ENCODE measurements at regions of chr16 and their contacts with region 1.

Region 1: GRCh38 chr16:2799866-2800239 is 1.6 kb downstream of the PRSS41 start:
- DNase-seq: no peak
- ATAC-seq: no peak
- H3K4me3 ChIP-seq: no peak overlapping the region
- H3K27ac ChIP-seq: no peak overlapping the region
- H3K4me1 ChIP-seq: peaks cover 0 to 10% (median 0%) of the 10 kb centered on the region in 12 donors
- H3K27me3 ChIP-seq: peaks cover 0 to 30% (median 8%) of the 10 kb centered on the region in 9 donors
- CTCF ChIP-seq: no peak
- POLR2A ChIP-seq: no peak

Region 2: DNA sequence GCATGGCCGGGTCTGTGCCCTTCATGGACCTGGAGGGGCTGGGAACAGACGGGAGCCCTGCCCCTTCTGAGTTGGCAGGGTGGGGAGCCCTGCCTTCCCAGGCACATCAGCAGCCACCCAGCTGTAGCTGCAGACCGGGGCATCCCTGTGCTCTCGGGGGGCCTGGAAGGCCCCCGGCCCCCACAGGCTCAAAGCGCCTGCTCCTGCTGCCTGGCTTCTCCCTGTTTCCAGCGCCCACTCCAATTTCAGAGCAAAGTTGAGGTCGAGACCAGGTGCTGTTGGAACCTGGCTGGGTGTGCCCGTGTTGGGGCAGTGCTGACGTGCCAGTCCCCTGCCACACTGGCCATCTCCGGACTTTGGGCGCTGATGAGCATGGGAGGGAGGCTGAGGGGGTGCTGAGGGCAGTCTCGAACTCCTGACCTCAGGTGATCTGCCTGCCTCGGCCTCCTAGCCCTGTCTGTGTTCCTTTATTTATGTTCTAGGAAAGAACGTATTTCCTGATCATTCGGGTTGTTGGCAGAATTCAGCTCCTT is 75.0 kb before region 1 on chr16:
- intact Hi-C with region 1: no loop called
- DNase-seq: no peak
- ATAC-seq: no peak
- H3K4me3 ChIP-seq: no peak overlapping the region
- H3K27ac ChIP-seq: no peak overlapping the region
- H3K4me1 ChIP-seq: peaks cover 0 to 15% (median 9%) of the 10 kb centered on the region in 12 donors
- H3K27me3 ChIP-seq: peaks cover 0 to 8% (median 0%) of the 10 kb centered on the region in 9 donors
- CTCF ChIP-seq: no peak
- POLR2A ChIP-seq: no peak

Region 3: GRCh38 chr16:2854700-2855309 is 55.0 kb after region 1 on chr16:
- intact Hi-C with region 1: loop called in 2 of 10 experiments (anchors 10 kb)
- DNase-seq: no peak
- ATAC-seq: no peak
- H3K4me3 ChIP-seq: no peak overlapping the region
- H3K27ac ChIP-seq: no peak overlapping the region
- H3K4me1 ChIP-seq: peaks cover 0 to 8% (median 0%) of the 10 kb centered on the region in 12 donors
- H3K27me3 ChIP-seq: peaks cover 13 to 59% (median 39%) of the 10 kb centered on the region in 9 donors
- CTCF ChIP-seq: peak in 5 of 12 donors; percentile 22 to 32 (median 27)
- POLR2A ChIP-seq: no peak

Region 4: DNA sequence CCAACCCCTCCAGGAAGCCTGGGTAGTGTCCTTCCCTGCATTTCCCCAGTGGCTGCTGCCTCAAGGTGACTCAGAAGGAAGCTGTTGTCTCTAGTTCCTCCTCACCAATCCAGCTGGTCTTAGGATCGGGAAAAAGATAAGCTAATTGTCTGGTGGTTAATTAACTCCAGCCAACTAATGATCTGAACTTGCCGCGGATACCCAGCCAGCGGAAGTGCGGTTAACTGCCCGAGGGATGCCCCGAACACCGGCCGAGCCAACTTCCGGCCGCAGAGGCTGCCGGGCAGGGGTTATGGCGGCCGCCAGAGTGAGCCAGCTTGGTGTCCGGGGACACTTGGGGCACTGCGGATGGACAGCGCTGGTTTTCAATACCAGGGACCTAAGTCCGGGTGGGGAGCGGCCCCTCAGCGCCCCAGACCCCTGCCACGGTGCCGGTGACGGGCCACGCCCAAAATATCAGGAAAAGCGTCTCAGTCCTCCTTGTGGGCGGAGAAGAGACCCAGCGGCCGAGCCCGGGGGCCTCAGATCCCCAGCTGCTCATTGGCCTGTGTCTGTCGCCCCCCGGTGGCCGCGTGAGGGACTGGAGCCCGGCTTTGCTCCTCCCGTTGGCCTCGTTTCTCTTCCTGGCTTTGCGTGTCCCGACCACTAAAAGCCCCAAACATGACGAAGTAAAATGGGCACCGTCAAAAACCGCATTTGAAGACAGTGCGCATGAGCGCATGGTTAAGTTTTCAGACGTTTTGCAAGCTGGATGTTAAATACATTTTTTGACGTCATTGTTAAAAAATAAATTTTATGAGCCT is 68.3 kb after region 1 on chr16:
- intact Hi-C with region 1: no loop called
- DNase-seq: peak; percentile 93 to 97 (median 94)
- ATAC-seq: peak; percentile 96 to 99 (median 98)
- H3K4me3 ChIP-seq: peak overlapping the region; percentile 47 to 84 (median 72)
- H3K27ac ChIP-seq: peak overlapping the region; percentile 88 to 98 (median 94)
- H3K4me1 ChIP-seq: peaks cover 0 to 16% (median 3%) of the 10 kb centered on the region in 12 donors
- H3K27me3 ChIP-seq: peaks cover 0 to 19% (median 0%) of the 10 kb centered on the region in 9 donors
- CTCF ChIP-seq: peak; percentile 97 to 99 (median 98)
- POLR2A ChIP-seq: peak in 1 of 2 donors; percentile 50

Region 5: DNA sequence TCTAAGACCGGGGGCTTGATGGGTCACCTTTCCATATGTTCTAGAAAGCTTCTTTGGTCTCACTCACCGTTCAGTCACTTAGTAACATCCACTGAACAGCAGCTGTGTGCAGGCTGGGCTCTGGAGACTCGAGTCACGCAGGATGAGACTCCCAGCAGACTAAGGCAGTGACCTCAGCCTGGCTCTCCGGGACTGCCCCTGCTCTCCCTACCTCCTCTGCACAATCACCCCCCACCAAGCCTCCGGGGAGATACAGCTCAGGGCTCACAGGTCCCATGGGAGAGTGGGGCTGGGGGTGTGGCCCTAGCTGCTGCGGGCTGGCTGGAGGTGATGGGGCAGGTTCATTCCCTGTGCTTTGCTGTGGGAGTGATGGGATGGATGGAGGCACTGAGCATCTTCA is 97.3 kb after region 1 on chr16:
- intact Hi-C with region 1: no loop called
- DNase-seq: no peak
- ATAC-seq: no peak
- H3K4me3 ChIP-seq: no peak overlapping the region
- H3K27ac ChIP-seq: no peak overlapping the region
- H3K4me1 ChIP-seq: no peaks in the 10 kb centered on the region
- H3K27me3 ChIP-seq: no peaks in the 10 kb centered on the region
- CTCF ChIP-seq: no peak
- POLR2A ChIP-seq: no peak